MCF 10A (cell line): ENCODE measurements at regions of chr5 and their contacts with region 1.

Region 1: DNA sequence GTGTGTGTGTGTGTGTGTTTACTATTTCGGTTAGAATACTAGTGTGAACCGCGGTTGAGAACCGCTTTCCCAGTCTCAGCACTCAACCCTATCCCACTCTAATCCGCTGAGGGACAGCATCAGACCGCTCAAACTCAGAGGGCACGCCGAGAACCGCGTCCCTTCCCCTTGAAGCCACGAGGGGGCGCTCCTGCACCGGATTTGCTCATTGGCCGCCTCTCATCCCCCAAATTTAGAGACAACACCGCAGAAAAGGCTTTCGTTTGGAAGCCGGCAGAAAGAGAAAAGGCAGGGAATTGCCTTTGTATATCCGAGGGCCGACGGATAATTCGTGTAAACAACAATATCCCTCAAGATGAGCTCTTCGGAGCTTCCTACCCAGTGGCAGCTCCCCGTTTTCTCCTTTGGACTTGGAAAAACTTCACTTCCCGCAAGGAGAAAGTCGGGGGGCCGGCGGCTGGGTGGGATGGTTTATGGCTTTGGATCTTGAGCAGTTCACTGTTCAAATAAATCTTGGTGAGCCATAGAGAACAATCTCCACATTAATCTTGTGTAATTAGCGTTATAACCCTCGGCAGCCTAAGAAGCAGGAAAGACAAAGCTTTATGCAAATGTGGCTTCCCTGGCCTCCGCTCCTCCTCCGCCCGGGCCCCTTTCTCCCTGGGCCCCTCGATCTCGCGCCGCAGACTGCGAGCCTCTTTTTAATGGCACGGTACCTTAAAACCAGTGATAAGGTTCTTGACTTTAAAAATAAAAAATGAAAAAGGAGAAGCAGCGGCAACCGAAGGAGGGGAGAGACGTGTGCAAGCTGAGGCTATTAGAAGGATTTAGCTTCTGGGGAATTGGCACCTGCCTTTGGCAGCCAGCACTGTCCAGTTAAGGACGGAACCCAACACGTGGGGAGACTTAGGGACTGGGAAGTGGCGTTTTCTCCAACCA is 296.8 kb downstream of the PARP8 start:
- DNase-seq: peak; percentile 77
- H3K4me3 Mint-ChIP-seq: peak overlapping the region; percentile 74
- H3K27ac Mint-ChIP-seq: no peak overlapping the region
- H3K4me1 Mint-ChIP-seq: peaks cover under 1% of the 10 kb centered on the region
- H3K27me3 Mint-ChIP-seq: peaks cover 78% of the 10 kb centered on the region
- CTCF ChIP-seq: peak; percentile 98

Region 2: GRCh38 chr5:50934343-50934742 is 28.9 kb before region 1 on chr5:
- CTCF ChIA-PET with region 1: interaction called, 15 read pairs
- POLR2A ChIA-PET with region 1: no interaction called
- intact Hi-C with region 1: no loop called
- DNase-seq: no peak
- H3K4me3 Mint-ChIP-seq: no peak overlapping the region
- H3K27ac Mint-ChIP-seq: no peak overlapping the region
- H3K4me1 Mint-ChIP-seq: no peaks in the 10 kb centered on the region
- H3K27me3 Mint-ChIP-seq: peaks cover 29% of the 10 kb centered on the region
- CTCF ChIP-seq: no peak

Region 3: GRCh38 chr5:51194671-51195070 is 231.5 kb after region 1 on chr5:
- CTCF ChIA-PET with region 1: no interaction called
- POLR2A ChIA-PET with region 1: no interaction called
- intact Hi-C with region 1: no loop called
- DNase-seq: no peak
- H3K4me3 Mint-ChIP-seq: no peak overlapping the region
- H3K27ac Mint-ChIP-seq: no peak overlapping the region
- H3K4me1 Mint-ChIP-seq: no peaks in the 10 kb centered on the region
- H3K27me3 Mint-ChIP-seq: peaks cover 48% of the 10 kb centered on the region
- CTCF ChIP-seq: no peak

Region 4: DNA sequence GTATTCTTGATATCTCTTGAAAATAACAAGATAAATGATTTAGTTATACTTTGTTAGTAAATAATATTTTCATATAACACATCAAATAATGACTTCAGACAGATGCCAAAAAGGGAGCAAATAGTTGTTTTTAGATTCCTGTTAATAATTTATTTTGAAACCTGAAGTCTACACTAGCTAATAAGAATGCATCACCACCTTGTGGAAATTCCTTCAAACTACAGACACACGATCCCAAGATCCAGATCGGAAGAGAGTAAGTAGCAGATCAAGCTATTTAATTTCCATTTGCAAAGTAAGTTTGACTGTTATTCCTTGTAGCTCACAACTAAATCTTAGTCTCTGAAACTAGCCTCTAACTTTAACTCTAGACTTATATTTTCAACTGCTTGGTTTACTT is 384.5 kb after region 1 on chr5:
- CTCF ChIA-PET with region 1: interaction called, 12 read pairs
- POLR2A ChIA-PET with region 1: interaction called, 3 read pairs
- intact Hi-C with region 1: loop called (anchors 1 kb)
- DNase-seq: peak; percentile 11
- H3K4me3 Mint-ChIP-seq: no peak overlapping the region
- H3K27ac Mint-ChIP-seq: no peak overlapping the region
- H3K4me1 Mint-ChIP-seq: peaks cover 14% of the 10 kb centered on the region
- H3K27me3 Mint-ChIP-seq: peaks cover 11% of the 10 kb centered on the region
- CTCF ChIP-seq: peak; percentile 21

Region 5: DNA sequence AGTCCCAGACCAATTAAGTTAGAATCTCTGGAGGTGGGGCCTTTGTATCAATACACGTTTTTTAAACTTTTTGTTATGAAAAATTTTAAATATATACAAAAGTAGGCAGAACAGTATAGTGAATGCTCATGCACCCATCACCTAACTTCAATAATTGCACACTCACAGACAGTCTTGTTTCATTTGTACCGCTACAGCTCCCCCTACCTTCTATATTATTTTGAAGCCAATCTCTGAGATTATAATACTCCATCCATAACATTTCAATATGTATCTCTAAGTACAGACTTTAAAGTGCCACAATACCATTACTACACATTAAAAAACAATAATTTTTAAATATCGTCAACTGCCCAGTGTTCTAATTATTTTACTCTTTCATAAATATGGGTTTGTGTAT is 452.9 kb after region 1 on chr5:
- CTCF ChIA-PET with region 1: interaction called, 18 read pairs
- POLR2A ChIA-PET with region 1: interaction called, 3 read pairs
- intact Hi-C with region 1: loop called (anchors 1 kb)
- DNase-seq: peak; percentile 6
- H3K4me3 Mint-ChIP-seq: no peak overlapping the region
- H3K27ac Mint-ChIP-seq: no peak overlapping the region
- H3K4me1 Mint-ChIP-seq: no peaks in the 10 kb centered on the region
- H3K27me3 Mint-ChIP-seq: peaks cover 25% of the 10 kb centered on the region
- CTCF ChIP-seq: peak; percentile 36

Region 6: GRCh38 chr5:51987669-51988209 is 1024.5 kb after region 1 on chr5:
- CTCF ChIA-PET with region 1: interaction called, 14 read pairs
- POLR2A ChIA-PET with region 1: no interaction called
- intact Hi-C with region 1: no loop called
- DNase-seq: no peak
- H3K4me3 Mint-ChIP-seq: no peak overlapping the region
- H3K27ac Mint-ChIP-seq: no peak overlapping the region
- H3K4me1 Mint-ChIP-seq: no peaks in the 10 kb centered on the region
- H3K27me3 Mint-ChIP-seq: peaks cover 16% of the 10 kb centered on the region
- CTCF ChIP-seq: no peak

Region 7: GRCh38 chr5:52560366-52560765 is 1597.2 kb after region 1 on chr5:
- CTCF ChIA-PET with region 1: no interaction called
- POLR2A ChIA-PET with region 1: no interaction called
- intact Hi-C with region 1: loop called (anchors 10 kb)
- DNase-seq: peak; percentile 12
- H3K4me3 Mint-ChIP-seq: no peak overlapping the region
- H3K27ac Mint-ChIP-seq: no peak overlapping the region
- H3K4me1 Mint-ChIP-seq: no peaks in the 10 kb centered on the region
- H3K27me3 Mint-ChIP-seq: peaks cover 65% of the 10 kb centered on the region
- CTCF ChIP-seq: peak; percentile 28